GM13977 (cell line): ENCODE measurements at regions of chr5 and their contacts with region 1.

Region 1: DNA sequence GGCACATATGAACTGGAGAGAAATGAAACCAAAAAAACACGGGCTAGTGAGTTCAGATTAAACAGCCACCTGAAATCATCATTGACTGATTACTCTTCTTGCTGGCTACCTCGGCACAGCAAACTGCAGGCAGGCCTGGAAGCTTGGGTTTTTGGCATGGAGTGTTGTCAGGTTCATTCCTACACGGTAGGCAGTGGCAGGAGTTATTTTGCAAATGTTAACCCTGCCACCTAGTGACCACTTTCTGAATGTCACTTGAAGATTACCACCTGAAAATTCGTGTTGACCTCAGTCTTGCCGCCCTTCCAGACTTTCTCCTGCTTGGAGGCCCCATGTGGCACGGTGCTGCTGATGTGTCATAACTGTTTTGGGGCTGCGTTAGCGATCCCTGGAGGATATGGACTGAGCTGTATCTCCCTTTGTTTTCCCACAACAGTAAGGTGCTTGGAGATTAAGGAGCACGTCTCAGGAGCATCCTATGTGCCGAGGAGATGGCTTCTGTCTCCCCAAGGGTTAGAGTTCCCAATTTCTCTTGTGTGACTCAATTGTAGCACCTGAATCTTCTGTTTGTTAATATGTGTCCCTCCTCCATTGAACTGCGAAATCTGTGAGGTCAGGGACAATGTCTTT is 12.7 kb upstream of the CD180 start:
- DNase-seq: peak; percentile 67
- CTCF ChIP-seq: peak; percentile 78

Region 2: GRCh38 chr5:66987949-66988838 is 221.1 kb before region 1 on chr5:
- in situ Hi-C with region 1: loop called (anchors 25 kb)
- DNase-seq: peak; percentile 19
- CTCF ChIP-seq: peak; percentile 55

Region 3: DNA sequence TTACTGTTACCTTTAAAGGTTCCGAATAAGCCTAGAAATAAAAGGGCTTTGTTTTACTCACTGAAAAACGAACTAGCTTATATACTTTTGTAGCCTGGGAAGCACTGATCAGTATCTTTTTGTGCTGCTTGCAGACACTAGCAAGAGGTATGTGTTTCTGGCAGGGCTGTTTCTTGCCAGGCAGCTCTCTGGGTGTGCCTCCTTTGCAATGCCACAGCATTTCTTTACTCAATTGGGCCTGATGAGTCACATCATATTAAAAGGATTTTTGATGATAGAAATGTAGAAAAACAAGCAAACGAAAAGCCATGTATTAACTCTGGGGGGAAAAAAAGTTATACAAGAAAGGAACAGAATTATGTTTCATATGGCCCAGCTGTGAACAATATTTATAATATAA is 48.3 kb before region 1 on chr5:
- in situ Hi-C with region 1: loop called (anchors 5 kb)
- DNase-seq: no peak
- CTCF ChIP-seq: no peak